ENCODE measurements at regions of chr19 and their contacts with region 1.

Region 1: GRCh38 chr19:2739602-2740313 is at the start of gene SLC39A3:
- DNase-seq: peak; percentile 94
- ATAC-seq: peak; percentile 100
- H3K4me3 Mint-ChIP-seq: peak within 1 kb of the TSS; percentile 88
- H3K27ac Mint-ChIP-seq: peak within 1 kb of the TSS; percentile 65
- H3K4me1 Mint-ChIP-seq: peaks cover 28% of the 10 kb centered on the region
- H3K27me3 Mint-ChIP-seq: peaks cover 3% of the 10 kb centered on the region
- CTCF ChIP-seq: no peak
- total RNA-seq, gene SLC39A3: 33.8 and 34.3 TPM in 2 replicates

Region 2: GRCh38 chr19:2719910-2720776 is 19.6 kb before region 1 on chr19:
- CTCF ChIA-PET with region 1: no interaction called
- POLR2A ChIA-PET with region 1: no interaction called
- intact Hi-C with region 1: loop called (anchors 2 kb)
- DNase-seq: no peak
- ATAC-seq: no peak
- H3K4me3 Mint-ChIP-seq: peak overlapping the region; percentile 66
- H3K27ac Mint-ChIP-seq: no peak overlapping the region
- H3K4me1 Mint-ChIP-seq: peaks cover 22% of the 10 kb centered on the region
- H3K27me3 Mint-ChIP-seq: peaks cover 5% of the 10 kb centered on the region
- CTCF ChIP-seq: no peak

Region 3: GRCh38 chr19:2798733-2799132 is 59.0 kb after region 1 on chr19:
- CTCF ChIA-PET with region 1: no interaction called
- POLR2A ChIA-PET with region 1: no interaction called
- intact Hi-C with region 1: no loop called
- DNase-seq: no peak
- ATAC-seq: no peak
- H3K4me3 Mint-ChIP-seq: no peak overlapping the region
- H3K27ac Mint-ChIP-seq: no peak overlapping the region
- H3K4me1 Mint-ChIP-seq: no peaks in the 10 kb centered on the region
- H3K27me3 Mint-ChIP-seq: no peaks in the 10 kb centered on the region
- CTCF ChIP-seq: no peak

Region 4: GRCh38 chr19:2944775-2945574 is 205.2 kb after region 1 on chr19 and contains the start of gene ZNF77:
- CTCF ChIA-PET with region 1: no interaction called
- POLR2A ChIA-PET with region 1: no interaction called
- intact Hi-C with region 1: no loop called
- DNase-seq: peak; percentile 96
- ATAC-seq: peak; percentile 98
- H3K4me3 Mint-ChIP-seq: peak within 1 kb of the TSS; percentile 96
- H3K27ac Mint-ChIP-seq: peak within 1 kb of the TSS; percentile 95
- H3K4me1 Mint-ChIP-seq: peaks cover 31% of the 10 kb centered on the region
- H3K27me3 Mint-ChIP-seq: no peaks in the 10 kb centered on the region
- CTCF ChIP-seq: no peak
- total RNA-seq, gene ZNF77: 5.2 and 6.7 TPM in 2 replicates

Region 5: GRCh38 chr19:2977001-2977685 is 237.4 kb after region 1 on chr19 and contains the start of gene TLE6:
- CTCF ChIA-PET with region 1: no interaction called
- POLR2A ChIA-PET with region 1: no interaction called
- intact Hi-C with region 1: no loop called
- DNase-seq: peak; percentile 83
- ATAC-seq: peak; percentile 98
- H3K4me3 Mint-ChIP-seq: peak within 1 kb of the TSS; percentile 91
- H3K27ac Mint-ChIP-seq: peak within 1 kb of the TSS; percentile 81
- H3K4me1 Mint-ChIP-seq: peaks cover 22% of the 10 kb centered on the region
- H3K27me3 Mint-ChIP-seq: peaks cover 8% of the 10 kb centered on the region
- CTCF ChIP-seq: no peak
- total RNA-seq, gene TLE6: 0.42 and 0.93 TPM in 2 replicates

Measured in activated B cell treated with CpG ODN at 0.5 μM for 24 hours (primary cell).